Gastrocnemius medialis (tissue), 4 donors: ENCODE measurements at regions of chr5 and their contacts with region 1.

Region 1: GRCh38 chr5:160213537-160213936 is 15.8 kb upstream of the FABP6 start:
- DNase-seq: no peak
- ATAC-seq: no peak
- H3K4me3 ChIP-seq: no peak overlapping the region
- H3K27ac ChIP-seq: no peak overlapping the region
- H3K4me1 ChIP-seq: no peaks in the 10 kb centered on the region
- H3K27me3 ChIP-seq: no peaks in the 10 kb centered on the region
- CTCF ChIP-seq: no peak
- POLR2A ChIP-seq: no peak

Region 2: GRCh38 chr5:159936686-159937329 is 276.7 kb before region 1 on chr5:
- in situ Hi-C with region 1: no loop called
- intact Hi-C with region 1: no loop called
- DNase-seq: no peak
- ATAC-seq: peak; percentile 41 to 82
- H3K4me3 ChIP-seq: no peak overlapping the region
- H3K27ac ChIP-seq: peak overlapping the region in 1 of 4 donors; percentile 26
- H3K4me1 ChIP-seq: no peaks in the 10 kb centered on the region
- H3K27me3 ChIP-seq: no peaks in the 10 kb centered on the region
- CTCF ChIP-seq: no peak
- POLR2A ChIP-seq: no peak

Region 3: GRCh38 chr5:160240350-160240749 is 26.8 kb after region 1 on chr5:
- in situ Hi-C with region 1: no loop called
- intact Hi-C with region 1: no loop called
- DNase-seq: no peak
- ATAC-seq: no peak
- H3K4me3 ChIP-seq: no peak overlapping the region
- H3K27ac ChIP-seq: no peak overlapping the region
- H3K4me1 ChIP-seq: no peaks in the 10 kb centered on the region
- H3K27me3 ChIP-seq: no peaks in the 10 kb centered on the region
- CTCF ChIP-seq: no peak
- POLR2A ChIP-seq: no peak

Region 4: GRCh38 chr5:160333721-160334120 is 120.2 kb after region 1 on chr5:
- in situ Hi-C with region 1: loop called in 1 of 4 experiments (anchors 10 kb)
- intact Hi-C with region 1: no loop called
- DNase-seq: no peak
- ATAC-seq: no peak
- H3K4me3 ChIP-seq: no peak overlapping the region
- H3K27ac ChIP-seq: no peak overlapping the region
- H3K4me1 ChIP-seq: no peaks in the 10 kb centered on the region
- H3K27me3 ChIP-seq: no peaks in the 10 kb centered on the region
- CTCF ChIP-seq: no peak
- POLR2A ChIP-seq: no peak

Region 5: GRCh38 chr5:160959804-160960203 is 746.3 kb after region 1 on chr5:
- in situ Hi-C with region 1: no loop called
- intact Hi-C with region 1: no loop called
- DNase-seq: no peak
- ATAC-seq: no peak
- H3K4me3 ChIP-seq: no peak overlapping the region
- H3K27ac ChIP-seq: no peak overlapping the region
- H3K4me1 ChIP-seq: no peaks in the 10 kb centered on the region
- H3K27me3 ChIP-seq: no peaks in the 10 kb centered on the region
- CTCF ChIP-seq: no peak
- POLR2A ChIP-seq: no peak

Region 6: GRCh38 chr5:161420521-161420920 is 1207.0 kb after region 1 on chr5:
- in situ Hi-C with region 1: no loop called
- intact Hi-C with region 1: no loop called
- DNase-seq: no peak
- ATAC-seq: no peak
- H3K4me3 ChIP-seq: no peak overlapping the region
- H3K27ac ChIP-seq: no peak overlapping the region
- H3K4me1 ChIP-seq: no peaks in the 10 kb centered on the region
- H3K27me3 ChIP-seq: no peaks in the 10 kb centered on the region
- CTCF ChIP-seq: no peak
- POLR2A ChIP-seq: no peak